Ascending aorta (tissue), 2 donors: ENCODE measurements at regions of chr4 and their contacts with region 1.

Region 1: DNA sequence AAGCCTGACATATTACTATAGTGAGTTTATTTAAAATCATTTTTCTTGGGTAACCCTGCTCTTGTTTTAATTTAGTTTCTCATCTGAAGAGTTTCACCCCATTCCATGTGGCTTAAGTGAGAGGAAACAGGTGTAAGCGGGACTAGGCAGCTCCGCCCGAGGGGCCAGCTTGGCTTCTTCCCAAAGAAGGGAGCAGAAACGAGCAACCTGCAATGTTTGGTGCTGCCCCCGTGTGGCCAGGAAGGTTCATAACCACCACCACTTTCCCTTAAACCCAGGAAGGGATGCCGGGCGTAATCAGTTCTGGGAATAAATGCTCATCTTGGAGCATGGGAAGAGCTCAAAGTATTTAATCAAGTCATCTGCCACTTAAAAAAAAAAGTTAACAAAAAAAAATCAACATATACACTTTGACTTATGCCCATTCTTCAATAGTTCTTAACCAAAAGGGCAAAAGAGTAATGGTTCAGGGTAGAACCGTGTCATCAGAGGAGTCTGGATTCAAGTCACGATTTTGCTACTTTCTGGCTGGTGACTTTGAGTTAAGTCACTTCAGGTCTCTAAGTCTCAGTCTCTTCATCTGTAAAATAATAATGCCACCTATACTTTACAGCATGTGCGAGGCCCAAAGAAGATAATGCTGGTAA is 147.9 kb downstream of the NSUN7 start:
- DNase-seq: peak in 1 of 2 donors; percentile 84
- H3K4me3 ChIP-seq: no peak overlapping the region
- H3K27ac ChIP-seq: peak overlapping the region; percentile 24 to 57
- H3K4me1 ChIP-seq: peaks cover 0 to 4% of the 10 kb centered on the region in 2 donors
- H3K27me3 ChIP-seq: no peaks in the 10 kb centered on the region
- CTCF ChIP-seq: peak; percentile 38 to 84 (median 79)

Region 2: DNA sequence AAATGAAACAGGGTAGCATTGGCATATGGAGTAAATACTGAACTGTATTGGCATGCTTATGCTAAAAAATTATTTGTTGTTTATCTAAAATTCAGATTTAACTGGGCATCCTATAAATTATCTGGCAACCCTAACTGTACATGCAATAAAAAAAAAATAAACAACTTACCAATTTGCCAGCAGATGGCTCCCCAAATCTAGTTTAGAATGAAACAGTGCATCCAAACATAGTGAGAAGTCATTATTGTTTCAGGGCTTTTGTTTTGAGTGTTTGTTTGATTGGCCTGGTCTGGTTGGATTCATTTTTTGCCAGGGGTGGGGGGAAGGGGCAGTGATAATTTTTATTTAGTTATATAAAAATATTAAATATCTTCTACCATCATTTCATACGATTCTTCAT is 160.8 kb before region 1 on chr4:
- intact Hi-C with region 1: loop called (anchors 2 kb)
- DNase-seq: no peak
- H3K4me3 ChIP-seq: no peak overlapping the region
- H3K27ac ChIP-seq: no peak overlapping the region
- H3K4me1 ChIP-seq: no peaks in the 10 kb centered on the region
- H3K27me3 ChIP-seq: no peaks in the 10 kb centered on the region
- CTCF ChIP-seq: peak in 1 of 3 experiments; percentile 44

Region 3: GRCh38 chr4:40749717-40750460 is 147.8 kb before region 1 on chr4 and contains the start of gene NSUN7:
- intact Hi-C with region 1: loop called (anchors 5 kb)
- DNase-seq: peak in 1 of 2 donors; percentile 71
- H3K4me3 ChIP-seq: peak within 1 kb of the TSS; percentile 54 to 70
- H3K27ac ChIP-seq: peak within 1 kb of the TSS; percentile 45 to 53
- H3K4me1 ChIP-seq: no peaks in the 10 kb centered on the region
- H3K27me3 ChIP-seq: no peaks in the 10 kb centered on the region
- CTCF ChIP-seq: no peak
- total RNA-seq, gene NSUN7: 5.0 TPM

Region 4: GRCh38 chr4:40840985-40841571 is 56.6 kb before region 1 on chr4:
- intact Hi-C with region 1: loop called (anchors 1 kb)
- DNase-seq: peak; percentile 36 to 91
- H3K4me3 ChIP-seq: no peak overlapping the region
- H3K27ac ChIP-seq: no peak overlapping the region
- H3K4me1 ChIP-seq: peaks cover 0 to 28% of the 10 kb centered on the region in 2 donors
- H3K27me3 ChIP-seq: no peaks in the 10 kb centered on the region
- CTCF ChIP-seq: peak; percentile 42 to 69 (median 55)

Region 5: GRCh38 chr4:40856822-40857362 is 40.8 kb before region 1 on chr4:
- intact Hi-C with region 1: loop called (anchors 5 kb)
- DNase-seq: peak; percentile 26 to 82
- H3K4me3 ChIP-seq: peak overlapping the region; percentile 47 to 64
- H3K27ac ChIP-seq: peak overlapping the region; percentile 8 to 53
- H3K4me1 ChIP-seq: peaks cover 0 to 15% of the 10 kb centered on the region in 2 donors
- H3K27me3 ChIP-seq: no peaks in the 10 kb centered on the region
- CTCF ChIP-seq: no peak

Region 6: GRCh38 chr4:40980318-40980883 is 82.7 kb after region 1 on chr4:
- intact Hi-C with region 1: no loop called
- DNase-seq: no peak
- H3K4me3 ChIP-seq: no peak overlapping the region
- H3K27ac ChIP-seq: no peak overlapping the region
- H3K4me1 ChIP-seq: no peaks in the 10 kb centered on the region
- H3K27me3 ChIP-seq: no peaks in the 10 kb centered on the region
- CTCF ChIP-seq: peak in 2 of 3 experiments; percentile 32 to 50